Keratinocyte (primary cell): ENCODE measurements at regions of chr6 and their contacts with region 1.

Region 1: DNA sequence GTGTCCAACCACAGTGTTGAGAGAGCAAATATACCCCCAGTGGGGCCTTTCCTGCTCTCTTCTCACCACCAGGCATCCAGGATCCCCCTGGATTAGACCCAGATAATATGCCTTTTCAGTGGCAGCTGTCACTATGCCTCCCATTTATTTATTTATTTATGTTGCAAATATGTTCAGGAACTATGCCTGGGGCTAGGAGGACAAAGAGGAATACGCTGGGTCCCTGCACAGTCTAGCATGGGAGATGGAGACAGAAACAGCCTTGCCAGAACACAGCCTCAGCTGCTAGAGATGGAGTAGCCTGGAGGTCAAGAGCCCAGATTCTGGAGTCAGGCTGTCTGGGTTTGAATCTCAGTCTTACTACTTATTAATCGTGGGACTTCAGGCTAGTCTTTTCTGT is 74.6 kb upstream of the LRFN2 start:
- DNase-seq: no peak
- H3K4me3 ChIP-seq: no peak overlapping the region
- H3K27ac ChIP-seq: no peak overlapping the region
- H3K4me1 ChIP-seq: no peaks in the 10 kb centered on the region
- H3K27me3 ChIP-seq: no peaks in the 10 kb centered on the region
- CTCF ChIP-seq: no peak

Region 2: DNA sequence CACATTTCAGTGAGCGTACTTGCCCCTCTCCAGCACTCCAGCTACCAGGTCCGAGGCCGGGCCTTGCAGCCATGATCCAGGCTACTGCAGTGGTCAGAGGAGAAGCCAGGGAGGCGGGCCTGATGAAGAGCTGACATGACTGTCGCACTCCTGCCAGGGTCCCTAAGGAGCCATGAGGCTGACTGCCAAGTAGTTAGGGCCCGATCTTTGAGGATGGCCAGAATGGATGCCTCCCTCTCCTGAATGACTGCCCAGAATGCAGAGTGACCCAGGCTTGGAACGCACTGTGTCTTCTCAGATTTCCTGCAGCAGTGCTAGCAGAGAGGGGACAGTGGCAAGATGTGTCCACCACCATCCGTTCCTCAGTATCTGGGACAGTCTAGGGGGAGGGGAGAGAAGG is 49.8 kb before region 1 on chr6:
- dilution Hi-C with region 1: loop called (anchors 5 kb)
- DNase-seq: no peak
- H3K4me3 ChIP-seq: no peak overlapping the region
- H3K27ac ChIP-seq: no peak overlapping the region
- H3K4me1 ChIP-seq: no peaks in the 10 kb centered on the region
- H3K27me3 ChIP-seq: no peaks in the 10 kb centered on the region
- CTCF ChIP-seq: no peak